Adrenal gland (tissue), 19 donors: ENCODE measurements at regions of chr12 and their contacts with region 1.

Region 1: DNA sequence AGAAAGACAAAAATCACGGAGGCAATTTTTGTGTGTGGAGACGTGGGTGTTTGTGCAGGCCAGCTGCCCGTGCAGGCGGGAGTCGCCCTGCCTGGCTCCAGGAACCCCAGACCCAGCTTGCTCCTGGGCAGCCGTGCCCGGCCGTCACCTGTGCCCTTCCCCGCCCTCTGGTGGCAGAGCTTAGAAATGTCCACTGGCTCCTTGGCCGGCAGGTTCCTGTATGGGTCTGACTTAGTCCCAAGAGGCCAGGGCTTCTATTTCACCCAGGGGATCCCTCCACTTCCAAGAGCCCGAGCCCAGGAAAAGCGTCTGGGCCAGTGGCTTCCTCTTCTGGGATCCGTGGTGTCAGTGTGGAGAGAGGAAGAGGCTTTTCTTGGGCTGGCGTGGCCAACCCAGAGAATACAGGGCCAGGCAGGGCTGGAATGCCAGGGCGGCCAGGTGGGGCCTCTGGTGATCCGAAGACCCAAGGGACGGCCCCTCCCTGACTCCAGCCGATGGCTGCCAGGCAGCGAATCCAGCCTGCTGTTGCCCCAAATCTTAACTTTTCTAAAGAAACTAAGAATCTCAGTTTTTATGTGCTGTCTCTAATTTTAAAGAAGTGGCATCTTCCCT is 120.9 kb downstream of the TMEM132C start:
- DNase-seq: peak; percentile 47 to 69 (median 61)
- H3K4me3 ChIP-seq: no peak overlapping the region
- H3K27ac ChIP-seq: no peak overlapping the region
- H3K4me1 ChIP-seq: no peaks in the 10 kb centered on the region
- H3K27me3 ChIP-seq: no peaks in the 10 kb centered on the region
- CTCF ChIP-seq: peak; percentile 48 to 75 (median 52)
- POLR2A ChIP-seq: no peak

Region 2: GRCh38 chr12:128259556-128260070 is 128.3 kb before region 1 on chr12:
- intact Hi-C with region 1: loop called in 1 of 2 experiments (anchors 2 kb)
- DNase-seq: peak in 6 of 7 donors; percentile 27 to 57 (median 36)
- H3K4me3 ChIP-seq: no peak overlapping the region
- H3K27ac ChIP-seq: no peak overlapping the region
- H3K4me1 ChIP-seq: no peaks in the 10 kb centered on the region
- H3K27me3 ChIP-seq: no peaks in the 10 kb centered on the region
- CTCF ChIP-seq: peak; percentile 52 to 76 (median 69)
- POLR2A ChIP-seq: no peak